ENCODE measurements at regions of chr14 and their contacts with region 1.

Region 1: GRCh38 chr14:99563233-99564129 is 40.5 kb downstream of the CCDC85C start:
- DNase-seq: peak; percentile 47
- H3K4me3 ChIP-seq: no peak overlapping the region
- H3K27ac ChIP-seq: no peak overlapping the region
- H3K4me1 ChIP-seq: peaks cover 34% of the 10 kb centered on the region
- H3K27me3 ChIP-seq: no peaks in the 10 kb centered on the region
- CTCF ChIP-seq: no peak

Region 2: DNA sequence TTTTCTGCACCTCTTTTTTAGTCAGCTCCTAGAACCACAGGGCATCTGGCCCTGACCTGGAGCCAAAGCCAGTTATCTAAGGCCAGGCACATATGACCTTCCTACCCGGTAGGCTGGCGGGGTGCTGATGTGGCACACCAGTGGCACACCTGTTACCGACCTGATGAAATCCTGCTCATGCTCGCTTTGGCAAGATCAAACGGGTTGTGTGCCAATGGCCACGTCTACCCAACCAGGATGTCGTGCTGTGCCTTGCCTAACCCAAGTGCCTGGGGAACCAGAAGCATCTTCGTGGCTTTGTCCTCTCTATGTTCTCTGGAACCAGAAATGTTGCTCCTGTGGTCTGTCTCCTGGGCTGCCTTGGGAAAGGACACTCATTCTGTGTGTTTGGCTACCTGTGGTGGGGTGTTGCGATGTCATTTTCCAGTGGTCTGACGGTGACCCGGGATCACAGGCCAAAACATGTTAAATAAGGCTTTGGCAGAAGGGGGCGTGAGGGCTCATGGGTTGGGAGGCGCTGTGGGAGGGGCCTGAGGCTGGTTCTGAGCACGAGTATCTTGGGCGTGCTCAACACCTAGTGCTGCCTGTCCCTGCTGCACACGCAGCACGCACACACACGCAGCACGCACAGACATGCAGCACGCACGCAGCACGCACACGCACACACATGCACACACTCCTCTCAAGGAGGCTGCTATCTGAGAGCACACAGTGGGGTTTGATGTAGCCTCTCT is 54.4 kb before region 1 on chr14:
- CTCF ChIA-PET with region 1: no interaction called
- dilution Hi-C with region 1: loop called (anchors 5 kb)
- in situ Hi-C with region 1: no loop called
- intact Hi-C with region 1: no loop called
- DNase-seq: peak; percentile 17
- H3K4me3 ChIP-seq: no peak overlapping the region
- H3K27ac ChIP-seq: no peak overlapping the region
- H3K4me1 ChIP-seq: no peaks in the 10 kb centered on the region
- H3K27me3 ChIP-seq: no peaks in the 10 kb centered on the region
- CTCF ChIP-seq: no peak

Region 3: GRCh38 chr14:99579903-99580570 is 16.6 kb after region 1 on chr14:
- CTCF ChIA-PET with region 1: no interaction called
- dilution Hi-C with region 1: no loop called
- in situ Hi-C with region 1: no loop called
- intact Hi-C with region 1: loop called (anchors 2 kb)
- DNase-seq: peak; percentile 63
- H3K4me3 ChIP-seq: peak overlapping the region in 2 of 3 experiments; percentile 12 to 26
- H3K27ac ChIP-seq: peak overlapping the region; percentile 85
- H3K4me1 ChIP-seq: peaks cover 53% of the 10 kb centered on the region
- H3K27me3 ChIP-seq: no peaks in the 10 kb centered on the region
- CTCF ChIP-seq: no peak

Region 4: GRCh38 chr14:99604283-99604765 is 40.8 kb after region 1 on chr14:
- CTCF ChIA-PET with region 1: no interaction called
- dilution Hi-C with region 1: no loop called
- in situ Hi-C with region 1: no loop called
- intact Hi-C with region 1: loop called (anchors 1 kb)
- DNase-seq: peak; percentile 95
- H3K4me3 ChIP-seq: peak overlapping the region; percentile 68 to 89 (median 71)
- H3K27ac ChIP-seq: peak overlapping the region; percentile 77
- H3K4me1 ChIP-seq: peaks cover 36% of the 10 kb centered on the region
- H3K27me3 ChIP-seq: no peaks in the 10 kb centered on the region
- CTCF ChIP-seq: no peak